GM12878 (cell line): ENCODE measurements at regions of chr2 and their contacts with region 1.

Region 1: GRCh38 chr2:158893026-158893425 is 75.4 kb upstream of the TANC1 start:
- DNase-seq: no peak
- ATAC-seq: no peak
- H3K4me3 ChIP-seq: no peak overlapping the region
- H3K27ac ChIP-seq: no peak overlapping the region
- H3K4me1 ChIP-seq: no peaks in the 10 kb centered on the region
- H3K27me3 ChIP-seq: no peaks in the 10 kb centered on the region
- CTCF ChIP-seq: no peak
- EP300 ChIP-seq: no peak
- POLR2A ChIP-seq: no peak
- RAD21 ChIP-seq: no peak

Region 2: DNA sequence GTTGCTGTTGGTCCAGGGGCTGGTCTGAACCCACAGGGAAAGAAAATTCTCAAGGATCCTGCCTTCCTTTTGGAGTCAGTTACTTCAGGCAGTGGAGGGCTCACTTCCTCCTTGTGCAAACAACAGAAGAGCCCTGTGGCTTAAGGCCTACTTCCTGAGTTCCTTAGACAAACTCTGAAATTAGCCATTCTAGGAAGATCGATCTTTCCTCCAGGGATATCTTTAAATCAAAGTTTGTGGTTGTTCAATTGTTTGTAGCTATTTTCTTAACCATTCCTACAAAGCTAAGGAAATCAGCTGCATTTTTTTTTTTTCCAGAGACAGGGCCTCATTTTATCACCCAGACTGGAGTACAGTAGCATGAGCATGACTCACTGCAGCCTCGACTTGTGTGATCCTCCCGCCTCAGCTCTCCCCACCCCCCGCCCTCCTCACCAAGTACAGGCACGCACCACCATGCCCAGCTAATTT is 231.4 kb after region 1 on chr2:
- CTCF ChIA-PET with region 1: interaction called, 18 read pairs
- POLR2A ChIA-PET with region 1: no interaction called
- RAD21 ChIA-PET with region 1: no interaction called
- SMC1A ChIA-PET with region 1: no interaction called
- in situ Hi-C with region 1: loop called (anchors 5 kb)
- intact Hi-C with region 1: no loop called
- DNase-seq: no peak
- ATAC-seq: peak; percentile 39; the same call in 2 of the 3 replicates
- H3K4me3 ChIP-seq: no peak overlapping the region
- H3K27ac ChIP-seq: no peak overlapping the region
- H3K4me1 ChIP-seq: peaks cover 4% of the 10 kb centered on the region; the same call in 1 of the 2 replicates
- H3K27me3 ChIP-seq: no peaks in the 10 kb centered on the region
- CTCF ChIP-seq: no peak
- EP300 ChIP-seq: no peak
- POLR2A ChIP-seq: no peak
- RAD21 ChIP-seq: no peak